K562 (cell line): ENCODE measurements at regions of chr13 and their contacts with region 1.

Region 1: DNA sequence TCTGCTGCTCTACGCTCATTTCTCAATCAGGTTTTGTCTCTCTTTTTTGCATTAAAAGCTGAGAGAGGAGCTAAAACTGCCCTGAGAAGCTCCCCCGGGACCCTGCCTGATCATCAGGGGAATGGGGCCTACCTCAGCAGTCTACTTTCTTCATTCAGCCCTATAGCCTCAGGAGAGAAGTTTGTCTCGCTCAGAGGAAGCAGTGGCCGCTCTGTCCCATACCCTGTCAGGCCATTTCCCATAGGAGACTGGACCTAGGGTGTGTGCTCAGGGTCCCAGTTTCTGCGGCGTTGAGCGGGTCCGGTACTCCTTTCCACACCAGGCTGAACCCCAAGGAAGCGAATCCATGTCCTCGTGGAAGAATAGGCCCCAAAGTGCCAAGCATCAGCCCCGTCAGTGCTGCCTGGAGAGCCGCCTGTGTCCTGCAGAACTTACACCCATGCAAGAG is 21.7 kb downstream of the UBE2L5 start:
- DNase-seq: no peak
- ATAC-seq: no peak; the same call in 2 of the 3 replicates
- H3K4me3 ChIP-seq: no peak overlapping the region
- H3K27ac ChIP-seq: no peak overlapping the region
- H3K4me1 ChIP-seq: peaks cover 0 to 6% of the 10 kb centered on the region in 2 experiments; a peak in 2 of 5 replicates
- H3K27me3 ChIP-seq: no peaks in the 10 kb centered on the region; a peak in 1 of 5 replicates
- CTCF ChIP-seq: no peak
- EP300 ChIP-seq: no peak
- POLR2A ChIP-seq: no peak
- RAD21 ChIP-seq: no peak

Region 2: DNA sequence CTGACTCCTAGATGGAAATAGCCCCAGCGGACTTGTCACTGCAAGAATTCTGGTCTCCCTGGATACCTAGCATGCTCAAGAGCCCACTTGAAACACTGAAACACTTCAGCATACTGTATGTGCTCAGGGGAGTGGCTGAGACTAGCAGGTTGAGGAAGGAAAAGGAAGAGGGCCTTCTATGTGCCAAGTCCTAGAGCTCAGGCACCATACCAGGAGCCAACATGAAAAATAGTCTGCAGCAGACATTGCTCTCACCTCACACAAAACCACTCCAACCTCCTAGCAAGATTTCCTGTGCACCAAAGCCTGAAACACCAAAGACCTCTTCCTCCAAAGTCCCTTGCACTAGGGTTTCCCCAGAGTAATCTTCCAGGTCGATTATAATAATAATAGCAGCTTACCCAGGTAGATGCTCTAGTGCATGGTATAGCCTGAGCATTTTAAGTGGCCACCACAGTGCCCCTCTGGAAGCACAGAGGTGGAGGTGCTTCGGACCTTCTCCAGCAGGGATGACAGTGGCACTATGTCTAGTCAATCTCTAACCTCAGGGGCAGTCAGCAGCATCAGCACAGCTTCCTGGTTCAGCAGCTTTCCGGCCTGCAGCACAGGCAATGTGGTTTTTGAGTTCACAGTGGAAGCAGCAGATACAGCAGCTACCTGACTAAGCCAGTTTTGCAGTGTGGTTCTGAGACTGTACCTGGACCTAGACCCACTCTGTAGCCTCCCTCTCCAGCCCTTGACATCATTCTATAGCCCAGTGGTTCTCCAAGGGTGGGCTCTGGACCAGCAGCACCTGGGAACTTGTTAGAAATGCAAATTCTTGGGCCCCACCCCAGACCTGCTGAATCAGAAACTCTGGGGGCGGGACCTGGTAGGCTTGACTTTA is 67.3 kb before region 1 on chr13:
- CTCF ChIA-PET with region 1: no interaction called
- POLR2A ChIA-PET with region 1: no interaction called
- in situ Hi-C with region 1: no loop called
- intact Hi-C with region 1: no loop called
- DNase-seq: no peak
- ATAC-seq: no peak
- H3K4me3 ChIP-seq: no peak overlapping the region
- H3K27ac ChIP-seq: no peak overlapping the region
- H3K4me1 ChIP-seq: peaks cover 0 to 7% of the 10 kb centered on the region in 2 experiments; a peak in 2 of 5 replicates
- H3K27me3 ChIP-seq: no peaks in the 10 kb centered on the region; a peak in 2 of 5 replicates
- CTCF ChIP-seq: no peak
- EP300 ChIP-seq: no peak
- POLR2A ChIP-seq: no peak
- RAD21 ChIP-seq: no peak

Region 3: GRCh38 chr13:30454991-30455390 is 11.0 kb after region 1 on chr13:
- CTCF ChIA-PET with region 1: no interaction called
- POLR2A ChIA-PET with region 1: interaction called, 11 read pairs
- in situ Hi-C with region 1: no loop called
- intact Hi-C with region 1: no loop called
- DNase-seq: no peak
- ATAC-seq: peak; percentile 32
- H3K4me3 ChIP-seq: no peak overlapping the region
- H3K27ac ChIP-seq: no peak overlapping the region
- H3K4me1 ChIP-seq: no peaks in the 10 kb centered on the region
- H3K27me3 ChIP-seq: no peaks in the 10 kb centered on the region
- CTCF ChIP-seq: no peak
- EP300 ChIP-seq: no peak
- POLR2A ChIP-seq: no peak
- RAD21 ChIP-seq: no peak